Panc1 (cell line): ENCODE measurements at regions of chr20 and their contacts with region 1.

Region 1: DNA sequence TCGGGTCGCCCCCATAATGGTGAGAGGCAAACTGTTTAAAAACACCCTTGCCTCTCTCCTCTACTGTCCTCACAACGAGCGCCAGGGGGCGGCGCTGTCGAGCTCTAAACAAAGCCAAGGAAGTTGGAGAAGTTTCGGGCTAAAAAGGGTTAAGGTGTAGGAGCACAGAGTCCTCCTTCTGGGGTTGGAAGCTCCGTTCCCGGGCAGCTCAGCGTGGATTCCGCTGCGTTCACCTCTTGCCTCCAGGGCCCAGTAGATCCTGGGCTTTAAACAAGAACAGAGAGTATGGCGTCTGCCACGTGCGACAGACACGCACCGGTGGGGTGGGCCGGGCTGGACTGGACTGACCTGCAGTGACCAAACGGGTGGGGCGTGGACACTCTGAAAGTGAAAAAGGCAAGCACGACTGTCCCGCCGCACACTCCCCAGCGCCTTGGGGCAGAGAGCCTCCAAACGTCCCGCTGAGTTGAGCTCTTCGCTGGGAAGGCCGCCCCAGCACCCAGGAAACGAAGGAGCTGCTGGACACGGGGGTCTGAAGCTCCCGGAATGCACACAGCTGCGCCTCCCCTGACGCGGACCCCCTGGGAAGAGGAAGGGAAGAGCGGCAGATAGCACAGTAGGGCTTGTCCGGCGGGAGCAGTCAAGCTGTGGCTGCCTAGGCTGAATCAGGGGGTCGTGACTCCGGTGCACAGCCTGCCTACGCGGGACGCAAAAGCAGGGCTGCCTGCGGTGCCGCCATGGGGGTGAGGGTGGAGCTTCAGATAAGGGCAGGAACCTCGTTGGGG is 1.6 kb upstream of the THBD start:
- DNase-seq: no peak
- ATAC-seq: no peak
- H3K4me3 ChIP-seq: peak overlapping the region in 1 of 2 experiments; percentile 56; a peak in 3 of 4 replicates
- H3K27ac ChIP-seq: no peak overlapping the region
- H3K4me1 ChIP-seq: peaks cover 8% of the 10 kb centered on the region
- H3K27me3 ChIP-seq: peaks cover 17% of the 10 kb centered on the region
- CTCF ChIP-seq: peak; percentile 79

Region 2: GRCh38 chr20:23152308-23152892 is 101.4 kb after region 1 on chr20:
- CTCF ChIA-PET with region 1: no interaction called
- POLR2A ChIA-PET with region 1: no interaction called
- in situ Hi-C with region 1: no loop called
- intact Hi-C with region 1: loop called (anchors 10 kb)
- DNase-seq: no peak
- ATAC-seq: no peak
- H3K4me3 ChIP-seq: no peak overlapping the region
- H3K27ac ChIP-seq: no peak overlapping the region
- H3K4me1 ChIP-seq: no peaks in the 10 kb centered on the region
- H3K27me3 ChIP-seq: no peaks in the 10 kb centered on the region
- CTCF ChIP-seq: no peak

Region 3: GRCh38 chr20:23331450-23332350 is 280.7 kb after region 1 on chr20:
- CTCF ChIA-PET with region 1: no interaction called
- POLR2A ChIA-PET with region 1: no interaction called
- in situ Hi-C with region 1: no loop called
- intact Hi-C with region 1: loop called (anchors 10 kb)
- DNase-seq: no peak
- ATAC-seq: no peak
- H3K4me3 ChIP-seq: no peak overlapping the region
- H3K27ac ChIP-seq: no peak overlapping the region
- H3K4me1 ChIP-seq: no peaks in the 10 kb centered on the region
- H3K27me3 ChIP-seq: no peaks in the 10 kb centered on the region
- CTCF ChIP-seq: no peak